CD4-positive, alpha-beta T cell (primary cell): ENCODE measurements at regions of chr3 and their contacts with region 1.

Region 1: DNA sequence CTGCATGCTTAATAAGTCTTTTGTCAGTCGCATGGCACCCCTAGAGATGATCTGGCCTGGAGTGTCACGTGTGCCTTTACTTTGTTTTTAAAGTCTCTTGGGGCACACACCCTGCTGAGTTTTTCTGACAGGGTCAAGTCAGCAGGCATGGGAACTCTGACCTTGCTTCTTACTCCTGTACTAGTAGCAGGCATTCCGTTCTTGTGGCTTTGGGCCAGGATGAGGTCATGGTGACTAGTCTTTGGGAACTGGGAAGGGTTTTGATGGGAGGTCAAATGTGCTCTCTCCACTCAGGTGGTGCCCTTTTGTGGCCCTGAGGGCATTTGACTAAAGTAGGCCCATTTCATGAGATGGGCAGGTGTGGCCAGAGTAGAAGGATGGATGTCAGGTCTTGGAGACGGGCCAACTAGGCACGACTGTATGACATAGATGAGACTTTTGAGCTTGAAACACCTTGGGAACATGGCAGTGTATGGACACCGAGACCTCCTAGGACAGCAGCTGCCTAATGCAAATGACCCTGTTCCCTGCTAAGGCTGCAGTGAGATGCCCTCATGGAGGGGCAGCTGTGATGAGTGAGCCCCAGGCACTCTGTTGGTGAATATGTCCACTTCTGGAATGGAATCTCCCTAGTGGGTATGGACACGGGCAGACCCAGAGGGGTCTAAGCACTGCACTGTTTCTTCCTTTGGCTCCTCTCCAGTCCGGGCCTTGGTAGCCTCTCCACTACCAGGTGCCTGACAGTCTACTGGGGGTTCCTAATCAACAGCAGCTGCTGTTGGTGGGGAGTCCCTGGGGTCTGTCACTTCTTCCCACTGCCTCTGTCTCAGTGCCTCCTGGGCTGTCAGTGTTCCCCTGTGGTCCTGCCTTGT is 16.4 kb downstream of the SRPRB start:
- DNase-seq: no peak
- ATAC-seq: no peak
- H3K4me3 ChIP-seq: no peak overlapping the region
- H3K4me3 Mint-ChIP-seq: no peak overlapping the region
- H3K27ac ChIP-seq: no peak overlapping the region
- H3K27ac Mint-ChIP-seq: no peak overlapping the region
- H3K4me1 ChIP-seq: no peaks in the 10 kb centered on the region
- H3K4me1 Mint-ChIP-seq: peaks cover 5% of the 10 kb centered on the region
- H3K27me3 ChIP-seq: no peaks in the 10 kb centered on the region
- H3K27me3 Mint-ChIP-seq: no peaks in the 10 kb centered on the region
- CTCF ChIP-seq: no peak

Region 2: DNA sequence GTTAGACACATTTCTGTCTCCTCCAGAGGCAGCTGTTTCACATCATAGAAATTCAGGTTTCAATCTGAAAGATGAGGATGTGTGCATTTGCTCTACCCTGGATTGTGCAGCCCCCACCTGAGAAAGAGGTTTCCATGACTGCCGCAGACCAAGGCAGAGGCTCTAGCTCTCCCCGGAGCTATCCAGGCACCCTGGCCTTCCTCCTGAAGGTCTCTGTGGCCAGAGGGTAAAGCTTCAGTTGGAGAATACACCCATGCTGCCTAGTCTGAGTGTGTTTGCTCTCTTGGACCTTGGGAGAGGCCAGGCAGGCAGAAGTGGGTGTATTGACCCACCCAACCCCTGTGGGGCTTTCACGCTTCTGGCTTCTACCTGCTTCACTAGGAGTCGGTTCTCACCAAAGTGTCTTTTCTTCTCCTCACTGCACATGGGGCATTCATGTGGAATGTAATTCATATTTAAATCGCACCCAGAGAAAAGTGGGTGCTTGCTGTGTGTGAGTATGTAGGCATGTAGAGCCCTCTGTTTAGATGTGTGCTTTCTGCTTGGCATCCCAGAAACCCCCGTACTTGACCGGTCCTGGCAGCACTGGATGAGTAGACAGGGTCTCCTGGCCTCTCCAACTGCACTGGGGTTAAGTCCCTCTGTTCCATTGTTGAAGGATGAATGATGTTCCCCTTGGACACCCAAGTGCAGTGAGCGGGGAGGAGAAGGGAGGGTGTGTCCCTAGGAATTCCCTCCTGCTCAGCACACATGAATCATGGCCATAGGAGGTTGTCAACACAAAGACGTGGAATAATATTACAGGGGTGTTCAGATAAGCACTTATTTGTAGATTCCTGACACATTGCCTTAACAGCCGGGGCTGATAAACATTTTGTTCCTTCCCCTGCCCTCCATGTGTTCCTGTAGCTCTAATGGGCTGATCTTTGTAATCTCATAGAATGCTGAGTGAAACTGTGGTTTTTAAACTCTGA is 94.0 kb after region 1 on chr3:
- CTCF ChIA-PET with region 1: no interaction called
- POLR2A ChIA-PET with region 1: no interaction called
- intact Hi-C with region 1: loop called in 1 of 2 experiments (anchors 5 kb)
- DNase-seq: no peak
- ATAC-seq: no peak
- H3K4me3 ChIP-seq: no peak overlapping the region
- H3K4me3 Mint-ChIP-seq: no peak overlapping the region
- H3K27ac ChIP-seq: no peak overlapping the region
- H3K27ac Mint-ChIP-seq: no peak overlapping the region
- H3K4me1 ChIP-seq: no peaks in the 10 kb centered on the region
- H3K4me1 Mint-ChIP-seq: no peaks in the 10 kb centered on the region
- H3K27me3 ChIP-seq: peaks cover 17 to 22% of the 10 kb centered on the region in 2 experiments
- H3K27me3 Mint-ChIP-seq: peaks cover 33% of the 10 kb centered on the region
- CTCF ChIP-seq: no peak

Region 3: GRCh38 chr3:133927540-133928066 is 105.6 kb after region 1 on chr3:
- CTCF ChIA-PET with region 1: interaction called, 4 read pairs
- POLR2A ChIA-PET with region 1: no interaction called
- intact Hi-C with region 1: loop called (anchors 1 to 2 kb)
- DNase-seq: peak; percentile 47 to 90 (median 68)
- ATAC-seq: peak; percentile 97
- H3K4me3 ChIP-seq: peak overlapping the region; percentile 51
- H3K4me3 Mint-ChIP-seq: peak overlapping the region; percentile 80
- H3K27ac ChIP-seq: no peak overlapping the region
- H3K27ac Mint-ChIP-seq: no peak overlapping the region
- H3K4me1 ChIP-seq: peaks cover 14% of the 10 kb centered on the region
- H3K4me1 Mint-ChIP-seq: peaks cover 7% of the 10 kb centered on the region
- H3K27me3 ChIP-seq: peaks cover 0 to 9% of the 10 kb centered on the region in 2 experiments
- H3K27me3 Mint-ChIP-seq: peaks cover 18% of the 10 kb centered on the region
- CTCF ChIP-seq: peak; percentile 54